ENCODE measurements at regions of chr2 and their contacts with region 1.

Region 1: DNA sequence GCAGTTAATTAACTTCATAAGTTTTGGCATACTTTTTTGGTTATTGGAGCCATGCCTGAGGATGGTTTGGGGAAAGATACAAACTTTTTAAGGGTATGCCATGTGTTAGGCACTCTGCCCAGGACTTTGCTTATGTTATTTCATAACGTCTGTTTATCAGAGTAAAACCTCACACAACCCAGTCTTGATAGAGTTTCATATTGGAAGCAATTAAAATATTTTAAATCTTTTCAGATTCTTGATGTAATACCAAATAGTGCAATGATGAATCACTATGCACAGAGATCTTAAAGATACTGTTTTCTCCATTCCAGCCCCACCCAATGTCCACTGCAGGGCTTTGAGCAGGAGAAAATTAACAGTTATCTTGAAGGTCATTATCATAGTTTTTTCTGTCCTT is 529.1 kb upstream of the HNMT start:
- DNase-seq: no peak
- ATAC-seq: no peak
- H3K4me3 ChIP-seq: no peak overlapping the region
- H3K27ac ChIP-seq: no peak overlapping the region
- H3K4me1 ChIP-seq: no peaks in the 10 kb centered on the region
- H3K27me3 ChIP-seq: no peaks in the 10 kb centered on the region
- CTCF ChIP-seq: no peak
- EP300 ChIP-seq: no peak
- POLR2A ChIP-seq: no peak
- RAD21 ChIP-seq: no peak

Region 2: DNA sequence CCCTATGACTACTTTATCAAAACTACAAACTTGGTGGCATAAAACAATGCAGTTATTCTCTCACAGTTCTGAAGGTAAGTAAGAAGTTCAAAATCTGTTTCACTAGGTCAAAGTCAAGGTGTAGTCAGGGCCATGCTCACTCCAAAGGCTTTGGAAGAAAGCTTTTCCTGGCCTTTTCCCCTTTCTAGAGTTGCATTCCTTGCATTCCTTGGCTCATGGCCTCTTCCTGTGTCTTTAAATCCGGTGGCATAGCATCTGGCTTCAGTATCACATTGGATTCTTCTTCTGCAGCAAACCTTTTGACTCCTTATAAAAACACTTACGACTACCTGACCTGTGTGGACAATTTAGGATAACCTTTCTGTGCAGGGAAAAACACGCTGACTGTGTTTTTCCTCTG is 14.4 kb before region 1 on chr2:
- CTCF ChIA-PET with region 1: no interaction called
- POLR2A ChIA-PET with region 1: no interaction called
- RAD21 ChIA-PET with region 1: no interaction called
- SMC1A ChIA-PET with region 1: interaction called, 3 read pairs
- in situ Hi-C with region 1: no loop called
- intact Hi-C with region 1: loop called (anchors 2 kb)
- DNase-seq: no peak
- ATAC-seq: no peak
- H3K4me3 ChIP-seq: no peak overlapping the region
- H3K27ac ChIP-seq: no peak overlapping the region
- H3K4me1 ChIP-seq: no peaks in the 10 kb centered on the region
- H3K27me3 ChIP-seq: no peaks in the 10 kb centered on the region
- CTCF ChIP-seq: no peak
- EP300 ChIP-seq: no peak
- POLR2A ChIP-seq: no peak
- RAD21 ChIP-seq: no peak

Region 3: DNA sequence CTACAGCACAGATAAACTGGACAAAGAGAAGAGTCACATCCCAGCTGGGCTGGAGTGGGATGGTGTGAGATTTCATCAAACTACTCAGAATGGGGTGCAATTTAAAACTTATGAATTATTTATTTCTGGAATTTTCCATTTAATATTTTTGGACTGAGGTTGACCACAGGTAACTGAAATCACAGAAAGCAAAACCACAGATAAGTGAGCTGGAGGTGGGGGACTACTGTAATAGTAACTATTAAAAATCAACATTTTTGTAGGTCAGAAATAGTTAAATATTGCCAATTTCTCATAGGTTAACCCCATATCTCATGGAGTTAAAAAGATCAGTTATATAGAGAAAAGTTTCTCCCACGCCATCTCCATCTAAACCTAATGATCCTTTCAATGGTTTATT is 1154.5 kb after region 1 on chr2:
- CTCF ChIA-PET with region 1: no interaction called
- POLR2A ChIA-PET with region 1: interaction called, 17 read pairs
- RAD21 ChIA-PET with region 1: no interaction called
- SMC1A ChIA-PET with region 1: no interaction called
- in situ Hi-C with region 1: no loop called
- intact Hi-C with region 1: no loop called
- DNase-seq: no peak
- ATAC-seq: no peak
- H3K4me3 ChIP-seq: no peak overlapping the region
- H3K27ac ChIP-seq: no peak overlapping the region
- H3K4me1 ChIP-seq: no peaks in the 10 kb centered on the region
- H3K27me3 ChIP-seq: no peaks in the 10 kb centered on the region
- CTCF ChIP-seq: no peak
- EP300 ChIP-seq: no peak
- POLR2A ChIP-seq: no peak
- RAD21 ChIP-seq: no peak

Measured in GM12878 (cell line).